Activated CD8-positive, alpha-beta T cell treated with anti-CD3 and anti-CD28 coated beads for 36 hours (primary cell): ENCODE measurements at regions of chr17 and their contacts with region 1.

Region 1: GRCh38 chr17:29732613-29733012 is 109.9 kb upstream of the CORO6 start:
- DNase-seq: no peak
- ATAC-seq: no peak
- H3K4me3 Mint-ChIP-seq: no peak overlapping the region
- H3K27ac Mint-ChIP-seq: peak overlapping the region; percentile 53
- H3K4me1 Mint-ChIP-seq: peaks cover 55% of the 10 kb centered on the region
- H3K27me3 Mint-ChIP-seq: no peaks in the 10 kb centered on the region
- CTCF ChIP-seq: no peak

Region 2: GRCh38 chr17:29747660-29748059 is 15.0 kb after region 1 on chr17:
- CTCF ChIA-PET with region 1: interaction called, 5 read pairs
- POLR2A ChIA-PET with region 1: interaction called, 12 read pairs
- intact Hi-C with region 1: no loop called
- DNase-seq: no peak
- ATAC-seq: no peak
- H3K4me3 Mint-ChIP-seq: no peak overlapping the region
- H3K27ac Mint-ChIP-seq: peak overlapping the region; percentile 50
- H3K4me1 Mint-ChIP-seq: peaks cover 67% of the 10 kb centered on the region
- H3K27me3 Mint-ChIP-seq: no peaks in the 10 kb centered on the region
- CTCF ChIP-seq: no peak